ENCODE measurements at regions of chr1 and their contacts with region 1.

Region 1: DNA sequence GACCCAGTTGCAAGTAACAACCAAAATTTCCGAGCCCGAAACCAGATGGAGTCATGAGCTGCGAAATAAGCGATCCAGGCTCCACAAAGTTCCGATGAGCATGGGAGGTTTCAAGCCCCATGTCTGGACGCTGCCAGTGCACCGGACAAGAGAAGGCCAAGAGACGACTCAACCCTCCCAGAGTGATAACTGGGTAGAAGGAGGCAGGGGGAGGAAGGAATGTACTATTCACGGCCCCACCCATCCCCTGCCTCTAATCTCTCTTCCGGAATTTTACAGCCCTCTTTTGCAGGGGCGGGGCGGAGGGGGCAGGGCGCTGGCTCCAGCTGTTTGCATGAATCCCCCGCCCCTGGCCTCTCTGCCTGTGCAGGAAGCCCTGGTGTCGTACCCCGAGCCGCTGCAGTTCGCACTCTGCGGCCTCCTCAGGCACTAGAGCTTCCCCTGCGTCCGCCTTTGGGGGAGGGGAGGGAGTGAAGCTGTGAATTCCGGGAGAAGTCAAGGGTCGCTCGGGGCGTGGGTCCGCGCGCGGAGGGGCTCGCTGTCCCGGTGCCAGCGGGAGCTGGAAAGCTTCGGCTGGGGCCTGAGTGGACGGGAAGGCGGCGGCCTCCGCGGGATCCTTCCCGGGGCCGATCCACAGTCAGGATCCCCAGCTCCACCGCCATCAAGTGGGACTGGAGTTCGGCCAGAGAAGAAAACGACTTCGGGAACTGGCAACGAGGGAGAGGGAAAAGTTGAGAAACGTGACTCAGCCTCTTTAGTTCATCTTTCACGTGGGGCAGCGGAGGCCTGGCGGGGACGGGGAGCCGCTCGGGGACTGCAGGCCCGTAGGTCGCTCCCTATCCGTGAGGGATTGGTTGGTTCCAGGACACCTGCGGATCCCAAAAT is 6.3 kb upstream of the PTP4A2 start:
- DNase-seq: peak; percentile 88
- H3K4me3 Mint-ChIP-seq: peak overlapping the region; percentile 85
- H3K27ac Mint-ChIP-seq: peak overlapping the region; percentile 93
- H3K4me1 Mint-ChIP-seq: peaks cover 53% of the 10 kb centered on the region
- H3K27me3 Mint-ChIP-seq: no peaks in the 10 kb centered on the region

Region 2: DNA sequence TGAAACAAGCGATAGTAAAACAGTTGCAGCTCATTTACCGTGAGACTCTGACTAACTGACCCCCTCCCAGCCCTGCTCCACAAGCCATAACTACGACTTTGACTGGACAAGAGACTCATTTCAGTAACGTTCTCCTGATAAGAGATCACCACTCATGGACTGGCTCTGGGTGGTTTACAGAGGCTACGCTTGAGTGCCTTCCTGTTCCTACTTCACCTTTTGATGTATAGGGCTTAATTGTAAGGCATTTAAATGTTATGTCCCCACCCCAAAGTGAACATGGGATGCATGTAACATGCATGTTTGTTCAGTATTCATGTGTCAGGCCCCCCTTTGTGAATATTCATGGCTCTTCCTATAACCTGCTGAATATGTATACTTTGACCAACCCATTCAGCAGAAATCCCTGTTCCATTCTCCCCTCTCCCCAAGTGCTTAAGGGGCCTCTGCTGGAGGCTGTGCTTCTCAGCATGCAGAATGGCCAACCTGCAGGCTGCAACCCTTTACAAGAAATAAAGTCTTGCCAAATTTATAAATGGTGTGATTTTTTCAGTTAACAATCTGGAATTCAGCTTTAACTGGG is 77.9 kb before region 1 on chr1:
- intact Hi-C with region 1: no loop called
- DNase-seq: no peak
- H3K4me3 Mint-ChIP-seq: no peak overlapping the region
- H3K27ac Mint-ChIP-seq: no peak overlapping the region
- H3K4me1 Mint-ChIP-seq: peaks cover under 1% of the 10 kb centered on the region
- H3K27me3 Mint-ChIP-seq: peaks cover 6% of the 10 kb centered on the region

Region 3: DNA sequence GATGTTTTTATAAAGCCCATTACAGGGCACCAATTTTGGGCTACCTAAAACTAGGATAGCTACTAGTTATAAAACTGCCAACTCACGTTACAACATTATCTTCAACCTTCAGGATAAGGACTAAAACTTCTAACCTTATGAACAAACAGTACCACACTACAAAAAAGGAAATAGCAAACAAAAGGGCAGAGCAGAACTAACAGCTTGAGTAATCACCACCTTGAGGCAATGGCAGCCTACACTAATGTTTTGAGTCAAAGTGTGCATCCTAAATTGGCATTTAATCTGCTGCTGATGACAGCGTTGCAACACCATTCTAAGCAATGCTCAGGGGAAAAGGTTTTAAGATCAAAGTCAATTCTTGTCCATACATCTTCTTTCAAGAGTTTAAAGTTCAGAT is 33.5 kb before region 1 on chr1:
- intact Hi-C with region 1: loop called (anchors 1 kb)
- DNase-seq: no peak
- H3K4me3 Mint-ChIP-seq: peak overlapping the region; percentile 1
- H3K27ac Mint-ChIP-seq: peak overlapping the region; percentile 33
- H3K4me1 Mint-ChIP-seq: peaks cover 51% of the 10 kb centered on the region
- H3K27me3 Mint-ChIP-seq: no peaks in the 10 kb centered on the region

Region 4: GRCh38 chr1:31931593-31932225 is 12.7 kb before region 1 on chr1:
- intact Hi-C with region 1: loop called (anchors 1 kb)
- DNase-seq: no peak
- H3K4me3 Mint-ChIP-seq: peak overlapping the region; percentile 83
- H3K27ac Mint-ChIP-seq: peak overlapping the region; percentile 94
- H3K4me1 Mint-ChIP-seq: peaks cover 97% of the 10 kb centered on the region
- H3K27me3 Mint-ChIP-seq: no peaks in the 10 kb centered on the region

Region 5: GRCh38 chr1:31955917-31956736 is 11.7 kb after region 1 on chr1:
- intact Hi-C with region 1: loop called (anchors 1 kb)
- DNase-seq: peak; percentile 84
- H3K4me3 Mint-ChIP-seq: peak overlapping the region; percentile 59
- H3K27ac Mint-ChIP-seq: peak overlapping the region; percentile 83
- H3K4me1 Mint-ChIP-seq: peaks cover 78% of the 10 kb centered on the region
- H3K27me3 Mint-ChIP-seq: no peaks in the 10 kb centered on the region

Region 6: DNA sequence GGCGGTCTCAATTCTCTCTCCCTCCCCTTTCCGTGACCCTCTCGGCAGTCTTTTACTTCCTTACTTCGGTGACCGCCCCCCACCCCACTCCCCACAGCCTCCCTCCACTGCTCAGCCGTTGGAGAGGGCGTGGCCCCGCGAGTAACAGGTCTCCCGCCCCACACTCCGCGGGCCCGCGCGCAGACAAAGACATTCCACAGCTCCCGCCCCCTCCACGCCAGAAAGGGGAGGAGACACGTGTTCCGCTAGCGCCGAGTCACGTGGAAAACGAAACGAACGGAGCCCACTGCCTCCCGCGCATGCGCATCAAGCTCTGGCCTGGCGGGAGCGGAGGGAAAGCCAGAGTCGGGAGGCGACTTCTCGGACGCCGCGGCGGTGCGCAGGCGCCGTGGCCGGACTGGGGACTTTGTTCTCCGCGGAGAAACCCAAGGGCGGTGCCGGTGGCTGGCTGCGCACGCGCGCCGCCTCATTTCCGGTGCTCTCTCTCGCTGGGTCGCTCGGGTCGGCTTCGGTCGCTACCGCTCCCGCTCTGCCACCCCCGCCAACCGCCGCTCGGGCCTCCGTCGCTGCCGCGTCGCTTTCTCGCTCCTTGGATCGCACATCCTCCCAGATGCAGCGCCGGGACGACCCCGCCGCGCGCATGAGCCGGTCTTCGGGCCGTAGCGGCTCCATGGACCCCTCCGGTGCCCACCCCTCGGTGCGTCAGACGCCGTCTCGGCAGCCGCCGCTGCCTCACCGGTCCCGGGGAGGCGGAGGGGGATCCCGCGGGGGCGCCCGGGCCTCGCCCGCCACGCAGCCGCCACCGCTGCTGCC is 69.1 kb after region 1 on chr1 and contains the start of gene KHDRBS1:
- intact Hi-C with region 1: loop called (anchors 5 kb)
- DNase-seq: peak; percentile 99
- H3K4me3 Mint-ChIP-seq: peak within 1 kb of the TSS; percentile 99
- H3K27ac Mint-ChIP-seq: peak within 1 kb of the TSS; percentile 97
- H3K4me1 Mint-ChIP-seq: peaks cover 31% of the 10 kb centered on the region
- H3K27me3 Mint-ChIP-seq: no peaks in the 10 kb centered on the region
- total RNA-seq, gene KHDRBS1: 156 and 158 TPM in 2 replicates

Region 7: GRCh38 chr1:32179443-32180185 is 235.2 kb after region 1 on chr1 and contains the start of gene TXLNA:
- intact Hi-C with region 1: loop called (anchors 5 kb)
- DNase-seq: peak; percentile 89
- H3K4me3 Mint-ChIP-seq: peak within 1 kb of the TSS; percentile 96
- H3K27ac Mint-ChIP-seq: peak within 1 kb of the TSS; percentile 93
- H3K4me1 Mint-ChIP-seq: peaks cover 47% of the 10 kb centered on the region
- H3K27me3 Mint-ChIP-seq: no peaks in the 10 kb centered on the region
- total RNA-seq, gene TXLNA: 109 and 110 TPM in 2 replicates